IMR-90 (cell line): ENCODE measurements at regions of chr2 and their contacts with region 1.

Region 1: GRCh38 chr2:69356471-69356870 is 30.6 kb downstream of the GFPT1 start:
- DNase-seq: no peak
- ATAC-seq: no peak
- H3K4me3 ChIP-seq: no peak overlapping the region
- H3K27ac ChIP-seq: no peak overlapping the region
- H3K4me1 ChIP-seq: peaks cover 3% of the 10 kb centered on the region; the same call in 1 of the 2 replicates
- H3K27me3 ChIP-seq: no peaks in the 10 kb centered on the region
- CTCF ChIP-seq: no peak
- POLR2A ChIP-seq: no peak
- RAD21 ChIP-seq: no peak

Region 2: DNA sequence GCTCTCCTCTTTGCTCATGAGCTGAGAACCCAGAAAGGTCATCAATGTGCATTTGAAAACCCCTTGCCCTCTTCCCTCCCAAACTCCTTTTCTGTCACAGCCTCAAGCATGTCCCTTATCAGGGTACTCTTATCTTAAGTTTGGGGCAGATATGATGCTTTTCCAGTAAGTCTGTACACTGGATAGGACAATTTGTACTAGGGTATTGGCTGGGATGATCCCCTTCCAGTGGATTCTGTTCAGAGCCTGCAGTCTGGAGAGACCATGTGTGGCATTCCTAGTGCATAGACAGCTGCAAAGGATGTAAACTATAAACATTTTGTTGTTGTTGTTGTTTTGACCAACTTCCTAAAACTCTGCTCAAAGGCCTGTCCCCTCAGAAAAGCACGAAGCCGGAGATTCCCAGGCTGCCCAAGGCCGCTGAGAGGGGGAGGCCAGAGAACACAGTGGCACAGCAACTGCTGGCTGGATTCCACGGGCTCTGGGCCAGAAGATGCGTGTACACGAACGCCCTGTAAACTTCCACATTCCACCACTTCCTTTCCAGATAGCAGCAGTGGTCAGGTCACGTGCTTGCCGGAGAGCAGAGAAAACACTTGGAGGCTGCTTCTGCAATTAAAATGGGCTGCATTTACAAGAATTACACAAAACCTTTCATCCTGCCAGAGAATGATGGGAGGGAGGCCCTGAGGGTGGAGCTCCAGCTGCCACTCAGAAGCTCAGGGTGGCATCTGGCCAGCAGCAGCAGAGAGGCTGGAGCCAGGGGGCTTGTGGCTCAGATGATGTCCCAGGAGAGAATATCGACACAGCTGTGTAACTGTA is 527.4 kb before region 1 on chr2:
- CTCF ChIA-PET with region 1: no interaction called
- POLR2A ChIA-PET with region 1: no interaction called
- dilution Hi-C with region 1: no loop called
- in situ Hi-C with region 1: no loop called
- intact Hi-C with region 1: no loop called
- DNase-seq: peak; percentile 96
- ATAC-seq: peak; percentile 73
- H3K4me3 ChIP-seq: no peak overlapping the region
- H3K27ac ChIP-seq: peak overlapping the region; percentile 40
- H3K4me1 ChIP-seq: peaks cover 36% of the 10 kb centered on the region
- H3K27me3 ChIP-seq: no peaks in the 10 kb centered on the region
- CTCF ChIP-seq: no peak
- POLR2A ChIP-seq: no peak
- RAD21 ChIP-seq: 0 out of 2 replicates have a peak, but pooled peaks have one; percentile 4

Region 3: DNA sequence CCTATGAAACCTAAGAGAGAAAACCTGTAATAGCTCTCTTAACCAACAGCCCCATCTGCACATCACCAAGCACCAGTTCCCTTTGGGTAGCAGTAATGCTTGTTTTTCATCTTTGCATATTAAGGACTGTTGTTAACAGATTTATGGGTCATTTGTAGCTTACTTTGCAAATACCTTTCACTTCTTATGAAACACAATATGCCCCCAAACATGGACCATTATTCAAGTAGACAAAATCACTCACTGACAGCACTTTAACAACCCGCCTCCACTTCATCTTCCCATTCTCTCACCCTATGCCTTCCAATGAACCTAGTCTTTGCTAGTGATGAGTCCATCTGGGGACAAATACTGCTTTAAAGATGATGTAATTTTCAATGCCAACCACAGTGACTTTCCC is 33.8 kb before region 1 on chr2:
- CTCF ChIA-PET with region 1: no interaction called
- POLR2A ChIA-PET with region 1: no interaction called
- dilution Hi-C with region 1: no loop called
- in situ Hi-C with region 1: no loop called
- intact Hi-C with region 1: loop called (anchors 5 kb)
- DNase-seq: no peak
- ATAC-seq: no peak
- H3K4me3 ChIP-seq: no peak overlapping the region
- H3K27ac ChIP-seq: no peak overlapping the region
- H3K4me1 ChIP-seq: peaks cover 9% of the 10 kb centered on the region
- H3K27me3 ChIP-seq: no peaks in the 10 kb centered on the region
- CTCF ChIP-seq: no peak
- POLR2A ChIP-seq: no peak
- RAD21 ChIP-seq: no peak